ENCODE measurements at regions of chr20 and their contacts with region 1.

Region 1: GRCh38 chr20:9626357-9626756 is 112.0 kb downstream of the LAMP5 start:
- DNase-seq: no peak
- H3K4me3 ChIP-seq: no peak overlapping the region
- H3K4me3 Mint-ChIP-seq: no peak overlapping the region
- H3K27ac ChIP-seq: no peak overlapping the region
- H3K27ac Mint-ChIP-seq: no peak overlapping the region
- H3K4me1 ChIP-seq: peaks cover 12 to 13% of the 10 kb centered on the region in 2 donors
- H3K4me1 Mint-ChIP-seq: peaks cover 17% of the 10 kb centered on the region
- H3K27me3 ChIP-seq: peaks cover 9 to 14% of the 10 kb centered on the region in 2 donors
- H3K27me3 Mint-ChIP-seq: peaks cover 10 to 26% (median 21%) of the 10 kb centered on the region in 3 donors
- CTCF ChIP-seq: no peak

Region 2: DNA sequence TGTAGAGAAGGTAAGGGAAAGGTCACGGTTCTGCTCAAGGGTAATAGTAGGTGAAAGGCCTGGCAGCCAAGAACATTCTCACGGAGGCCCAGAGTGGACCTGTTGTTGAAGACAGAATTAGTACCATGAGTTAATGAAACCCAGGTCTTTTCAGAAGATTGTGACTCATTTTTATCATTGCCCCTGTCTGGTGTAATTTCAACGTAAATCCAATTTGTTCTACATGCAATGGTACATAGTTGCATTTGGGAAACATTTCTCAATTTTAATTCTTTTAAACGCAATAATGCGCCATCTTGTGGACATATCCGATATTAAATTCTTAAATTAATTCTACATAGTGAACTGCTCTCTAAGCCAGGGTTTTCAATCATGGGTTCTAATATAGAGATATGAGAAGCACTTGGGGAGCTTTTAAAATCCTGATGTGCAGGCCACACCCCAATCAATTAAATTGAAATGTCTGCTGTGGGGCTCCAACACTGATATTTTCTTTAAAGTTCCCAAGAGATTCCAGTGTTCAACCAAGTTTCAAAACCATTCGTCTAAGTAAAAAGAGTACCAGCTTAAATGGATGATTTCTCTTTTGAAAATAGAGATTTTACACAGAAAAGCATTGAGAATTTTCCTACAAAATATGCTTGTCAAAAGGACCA is 1236.8 kb before region 1 on chr20:
- intact Hi-C with region 1: no loop called
- DNase-seq: peak; percentile 28 to 64 (median 53)
- H3K4me3 ChIP-seq: peak overlapping the region in 1 of 3 experiments; percentile 16
- H3K4me3 Mint-ChIP-seq: no peak overlapping the region
- H3K27ac ChIP-seq: peak overlapping the region in 1 of 2 donors; percentile 63
- H3K27ac Mint-ChIP-seq: peak overlapping the region in 5 of 7 donors; percentile 13 to 62 (median 54)
- H3K4me1 ChIP-seq: peaks cover 40 to 61% of the 10 kb centered on the region in 2 donors
- H3K4me1 Mint-ChIP-seq: peaks cover 57% of the 10 kb centered on the region
- H3K27me3 ChIP-seq: no peaks in the 10 kb centered on the region
- H3K27me3 Mint-ChIP-seq: no peaks in the 10 kb centered on the region
- CTCF ChIP-seq: peak; percentile 79

Region 3: DNA sequence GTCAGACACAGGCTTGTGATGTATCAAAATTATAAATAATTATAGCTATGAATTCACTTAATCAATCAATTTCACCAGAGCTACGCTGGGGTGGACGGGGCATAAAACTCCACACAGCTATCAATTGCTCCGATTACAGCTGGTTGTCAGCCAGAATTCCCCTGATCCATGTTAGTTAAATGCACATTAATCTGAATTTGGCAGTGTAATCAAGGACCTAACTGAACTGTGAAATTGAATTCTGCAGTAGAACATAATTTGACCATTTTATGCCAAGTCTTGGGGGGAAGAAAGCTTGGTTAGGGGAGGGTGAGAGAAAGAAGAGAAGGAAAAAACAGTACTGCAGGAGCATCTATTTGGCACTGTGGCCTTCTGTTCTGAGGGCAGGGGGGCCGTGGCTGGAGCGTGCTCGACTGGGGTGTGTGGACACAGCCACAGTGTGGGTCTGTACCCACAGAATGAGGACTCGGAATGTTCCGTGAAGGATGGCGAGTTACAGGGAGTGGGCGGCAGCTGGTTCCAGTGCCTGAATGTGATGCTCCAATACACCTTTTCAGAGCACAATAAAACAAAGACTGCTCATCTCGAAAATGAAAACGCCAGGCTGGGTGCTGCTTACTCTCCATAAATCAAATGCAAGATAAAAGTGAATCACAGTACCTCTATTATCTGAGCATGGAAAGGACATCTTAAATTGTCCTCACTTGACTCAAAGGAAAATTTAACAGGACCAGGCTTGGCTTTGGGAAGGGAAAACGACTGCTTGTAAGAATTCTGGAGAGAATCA is 52.8 kb before region 1 on chr20:
- intact Hi-C with region 1: no loop called
- DNase-seq: no peak
- H3K4me3 ChIP-seq: no peak overlapping the region
- H3K4me3 Mint-ChIP-seq: peak overlapping the region in 1 of 2 donors; percentile 56
- H3K27ac ChIP-seq: no peak overlapping the region
- H3K27ac Mint-ChIP-seq: no peak overlapping the region
- H3K4me1 ChIP-seq: no peaks in the 10 kb centered on the region
- H3K4me1 Mint-ChIP-seq: no peaks in the 10 kb centered on the region
- H3K27me3 ChIP-seq: peaks cover 21 to 26% of the 10 kb centered on the region in 2 donors
- H3K27me3 Mint-ChIP-seq: peaks cover 23 to 44% (median 28%) of the 10 kb centered on the region in 3 donors
- CTCF ChIP-seq: no peak

Region 4: GRCh38 chr20:11544029-11544678 is 1917.8 kb after region 1 on chr20:
- intact Hi-C with region 1: loop called in 1 of 2 experiments (anchors 10 kb)
- DNase-seq: peak; percentile 29 to 40 (median 38)
- H3K4me3 ChIP-seq: no peak overlapping the region
- H3K4me3 Mint-ChIP-seq: no peak overlapping the region
- H3K27ac ChIP-seq: no peak overlapping the region
- H3K27ac Mint-ChIP-seq: no peak overlapping the region
- H3K4me1 ChIP-seq: no peaks in the 10 kb centered on the region
- H3K4me1 Mint-ChIP-seq: no peaks in the 10 kb centered on the region
- H3K27me3 ChIP-seq: no peaks in the 10 kb centered on the region
- H3K27me3 Mint-ChIP-seq: peaks cover 0 to 8% (median 0%) of the 10 kb centered on the region in 3 donors
- CTCF ChIP-seq: peak; percentile 58